ENCODE measurements at regions of chr2 and their contacts with region 1.

Region 1: GRCh38 chr2:187842978-187843847 is 289.0 kb upstream of the TFPI start:
- DNase-seq: no peak
- ATAC-seq: peak; percentile 66 to 92 (median 82)
- H3K4me3 ChIP-seq: no peak overlapping the region
- H3K27ac ChIP-seq: no peak overlapping the region
- H3K4me1 ChIP-seq: no peaks in the 10 kb centered on the region
- H3K27me3 ChIP-seq: no peaks in the 10 kb centered on the region
- CTCF ChIP-seq: peak; percentile 13 to 62 (median 32)

Region 2: DNA sequence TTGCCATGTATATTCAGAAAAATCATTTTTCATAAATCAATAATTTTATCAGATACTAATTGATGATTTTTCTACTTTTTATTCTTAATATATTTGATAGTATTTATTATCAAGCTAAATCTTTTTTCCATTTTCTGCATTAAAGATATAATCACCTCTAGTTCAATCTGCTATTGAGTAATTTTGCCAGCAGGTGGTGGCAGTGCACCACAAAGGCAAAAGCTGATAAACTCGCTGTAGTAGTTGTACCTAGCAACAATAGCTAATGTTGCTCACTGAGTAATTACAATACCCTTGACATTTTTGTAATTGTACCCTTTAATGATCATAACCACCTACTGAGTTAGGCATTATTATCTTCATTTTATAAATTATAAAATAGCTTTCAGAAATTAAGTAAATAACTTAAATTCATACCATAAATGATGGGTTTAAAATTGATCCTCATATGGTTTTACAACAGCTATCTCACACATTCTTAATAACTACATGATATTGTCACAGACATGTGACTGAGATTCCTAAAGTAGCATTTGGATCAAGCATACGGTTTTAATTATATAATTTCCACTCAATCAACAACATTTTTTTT is 343.2 kb before region 1 on chr2:
- intact Hi-C with region 1: loop called in 1 of 3 experiments (anchors 5 kb)
- DNase-seq: peak in 4 of 6 donors; percentile 25 to 65 (median 38)
- ATAC-seq: peak; percentile 87 to 96 (median 96)
- H3K4me3 ChIP-seq: no peak overlapping the region
- H3K27ac ChIP-seq: no peak overlapping the region
- H3K4me1 ChIP-seq: peaks cover 0 to 11% (median 6%) of the 10 kb centered on the region in 3 donors
- H3K27me3 ChIP-seq: no peaks in the 10 kb centered on the region
- CTCF ChIP-seq: peak; percentile 26 to 79 (median 57)

Region 3: DNA sequence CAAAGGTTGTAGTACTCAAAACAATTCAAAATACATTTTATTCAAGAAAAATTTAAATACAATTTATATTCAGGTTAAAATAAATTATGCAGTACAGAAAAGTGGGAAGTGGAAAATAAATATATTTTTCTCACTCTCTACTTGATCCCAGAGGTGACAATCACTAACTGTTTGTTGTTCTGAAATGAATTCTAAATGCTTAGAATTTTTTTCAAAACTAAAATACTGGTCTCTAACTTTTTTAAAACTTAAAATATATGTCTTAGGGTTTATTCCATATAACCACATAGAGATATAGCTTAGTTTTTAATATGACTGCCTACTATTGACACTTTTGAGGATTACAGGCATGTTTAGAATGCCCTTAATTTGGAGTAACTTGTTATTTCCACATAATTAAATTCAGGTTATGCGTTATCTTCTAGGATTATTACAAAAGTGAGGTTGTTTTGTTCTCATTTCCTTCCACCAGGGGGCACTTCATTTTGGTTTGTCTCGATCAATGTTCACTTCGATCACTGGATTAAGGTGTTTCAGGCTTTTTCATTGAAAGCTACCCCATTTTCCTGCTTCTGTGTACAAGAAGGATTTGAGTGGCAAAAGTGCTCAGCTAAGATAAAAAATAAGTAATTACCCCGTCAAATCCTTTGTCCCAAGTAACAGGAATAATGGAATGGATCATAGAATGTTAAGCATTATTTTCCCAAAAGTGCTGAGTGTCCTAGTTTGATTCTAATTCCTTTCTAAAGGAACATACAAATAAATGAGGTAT is 261.9 kb before region 1 on chr2:
- intact Hi-C with region 1: loop called in 1 of 3 experiments (anchors 10 kb)
- DNase-seq: peak in 1 of 6 donors; percentile 31
- ATAC-seq: peak; percentile 84 to 89 (median 87)
- H3K4me3 ChIP-seq: peak overlapping the region in 1 of 4 donors; percentile 28
- H3K27ac ChIP-seq: no peak overlapping the region
- H3K4me1 ChIP-seq: peaks cover 3 to 7% (median 5%) of the 10 kb centered on the region in 3 donors
- H3K27me3 ChIP-seq: no peaks in the 10 kb centered on the region
- CTCF ChIP-seq: peak; percentile 34 to 75 (median 54)

Region 4: DNA sequence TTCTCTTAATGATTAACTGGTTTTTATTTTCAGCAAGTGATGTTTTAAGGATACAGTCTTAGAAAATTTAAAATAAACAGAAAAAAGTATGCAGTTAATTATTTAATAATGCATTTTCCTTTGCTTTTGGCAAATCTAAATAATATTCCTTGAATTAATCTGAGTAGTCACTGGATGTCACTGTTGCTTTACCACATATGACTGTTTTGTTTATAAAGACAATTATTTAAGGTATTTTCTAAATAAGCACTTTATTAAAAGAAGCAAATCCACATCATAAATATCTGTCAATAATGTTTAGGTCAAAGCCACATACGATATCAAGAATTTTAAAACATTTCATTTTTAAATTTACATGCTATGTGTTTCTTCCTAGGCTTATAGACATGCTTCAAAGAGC is 248.4 kb before region 1 on chr2:
- intact Hi-C with region 1: loop called in 1 of 3 experiments (anchors 10 kb)
- DNase-seq: no peak
- ATAC-seq: no peak
- H3K4me3 ChIP-seq: no peak overlapping the region
- H3K27ac ChIP-seq: no peak overlapping the region
- H3K4me1 ChIP-seq: peaks cover 0 to 7% (median 0%) of the 10 kb centered on the region in 3 donors
- H3K27me3 ChIP-seq: no peaks in the 10 kb centered on the region
- CTCF ChIP-seq: no peak

Region 5: GRCh38 chr2:187890690-187891089 is 47.5 kb after region 1 on chr2:
- intact Hi-C with region 1: no loop called
- DNase-seq: no peak
- ATAC-seq: no peak
- H3K4me3 ChIP-seq: no peak overlapping the region
- H3K27ac ChIP-seq: no peak overlapping the region
- H3K4me1 ChIP-seq: peaks cover 0 to 7% (median 0%) of the 10 kb centered on the region in 3 donors
- H3K27me3 ChIP-seq: no peaks in the 10 kb centered on the region
- CTCF ChIP-seq: no peak

Region 6: DNA sequence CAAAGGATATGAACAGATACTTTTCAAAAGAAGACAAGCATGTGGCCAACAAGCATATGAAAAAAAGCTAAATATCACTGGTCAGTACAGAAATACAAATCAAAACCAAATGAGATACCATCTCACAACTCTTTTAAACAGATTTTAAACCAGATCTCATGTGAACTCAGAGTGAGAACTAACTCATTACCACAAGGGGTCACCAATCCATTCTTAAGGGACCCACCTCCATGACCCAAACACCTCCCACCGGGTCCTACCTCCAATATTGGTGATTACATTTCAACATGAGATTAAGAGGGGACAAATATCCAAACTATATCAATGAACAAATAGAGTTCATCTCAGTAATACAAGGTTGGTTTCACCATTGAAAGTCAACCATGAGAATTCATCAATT is 128.7 kb after region 1 on chr2:
- intact Hi-C with region 1: no loop called
- DNase-seq: no peak
- ATAC-seq: no peak
- H3K4me3 ChIP-seq: no peak overlapping the region
- H3K27ac ChIP-seq: no peak overlapping the region
- H3K4me1 ChIP-seq: no peaks in the 10 kb centered on the region
- H3K27me3 ChIP-seq: no peaks in the 10 kb centered on the region
- CTCF ChIP-seq: no peak